ENCODE measurements at regions of chr13 and their contacts with region 1.

Region 1: GRCh38 chr13:79679334-79679733 is 198.4 kb downstream of the NDFIP2 start:
- DNase-seq: peak in 3 of 9 donors; percentile 1 to 32 (median 4)
- ATAC-seq: no peak
- H3K4me3 ChIP-seq: no peak overlapping the region
- H3K4me3 Mint-ChIP-seq: no peak overlapping the region
- H3K27ac ChIP-seq: no peak overlapping the region
- H3K27ac Mint-ChIP-seq: no peak overlapping the region
- H3K4me1 ChIP-seq: no peaks in the 10 kb centered on the region
- H3K4me1 Mint-ChIP-seq: no peaks in the 10 kb centered on the region
- H3K27me3 ChIP-seq: no peaks in the 10 kb centered on the region
- H3K27me3 Mint-ChIP-seq: peaks cover 0 to 11% (median 5%) of the 10 kb centered on the region in 5 donors

Region 2: GRCh38 chr13:79631051-79631659 is 48.2 kb before region 1 on chr13:
- CTCF ChIA-PET with region 1: no interaction called
- POLR2A ChIA-PET with region 1: no interaction called
- intact Hi-C with region 1: no loop called
- DNase-seq: no peak
- ATAC-seq: no peak
- H3K4me3 ChIP-seq: no peak overlapping the region
- H3K4me3 Mint-ChIP-seq: no peak overlapping the region
- H3K27ac ChIP-seq: no peak overlapping the region
- H3K27ac Mint-ChIP-seq: no peak overlapping the region
- H3K4me1 ChIP-seq: no peaks in the 10 kb centered on the region
- H3K4me1 Mint-ChIP-seq: no peaks in the 10 kb centered on the region
- H3K27me3 ChIP-seq: no peaks in the 10 kb centered on the region
- H3K27me3 Mint-ChIP-seq: peaks cover 7 to 33% (median 13%) of the 10 kb centered on the region in 5 donors

Region 3: DNA sequence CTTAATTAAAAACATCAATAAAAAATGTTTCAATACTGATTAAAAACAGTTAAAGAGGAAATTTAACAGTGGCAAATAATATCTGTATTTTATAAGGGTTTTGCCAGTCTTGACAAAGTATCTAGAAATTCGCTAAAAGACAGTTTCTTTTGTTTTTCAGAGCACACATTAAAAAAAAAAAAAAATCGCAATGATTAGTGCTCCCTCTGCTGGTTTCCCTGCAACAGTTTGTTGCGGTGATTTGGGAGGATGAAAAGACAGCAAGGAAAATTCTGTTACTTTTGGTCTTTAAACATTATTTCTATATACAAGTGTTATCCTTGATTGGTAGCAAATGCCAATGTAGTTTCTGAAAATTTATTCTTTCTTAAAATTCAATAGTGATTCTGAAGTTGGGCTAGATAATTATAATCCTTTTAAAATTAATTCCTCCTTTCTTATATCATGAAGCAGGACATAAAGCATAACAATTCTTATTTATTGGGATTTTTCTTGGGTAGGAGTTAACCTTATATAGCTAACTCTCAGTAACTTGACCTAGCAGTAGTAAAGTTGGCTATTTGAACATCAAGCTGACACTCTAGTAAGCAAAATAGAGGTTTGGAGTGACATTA is 684.7 kb after region 1 on chr13:
- CTCF ChIA-PET with region 1: no interaction called
- POLR2A ChIA-PET with region 1: no interaction called
- intact Hi-C with region 1: loop called in 1 of 2 experiments (anchors 5 kb)
- DNase-seq: no peak
- ATAC-seq: no peak
- H3K4me3 ChIP-seq: no peak overlapping the region
- H3K4me3 Mint-ChIP-seq: no peak overlapping the region
- H3K27ac ChIP-seq: no peak overlapping the region
- H3K27ac Mint-ChIP-seq: no peak overlapping the region
- H3K4me1 ChIP-seq: no peaks in the 10 kb centered on the region
- H3K4me1 Mint-ChIP-seq: peaks cover 0 to 3% (median 0%) of the 10 kb centered on the region in 7 donors
- H3K27me3 ChIP-seq: no peaks in the 10 kb centered on the region
- H3K27me3 Mint-ChIP-seq: peaks cover 0 to 13% (median 3%) of the 10 kb centered on the region in 5 donors

Measured in naive thymus-derived CD4-positive, alpha-beta T cell (primary cell).